MCF 10A (cell line): ENCODE measurements at regions of chr7 and their contacts with region 1.

Region 1: GRCh38 chr7:5704534-5704922 is 76.9 kb downstream of the RNF216 start:
- DNase-seq: peak; percentile 86
- H3K4me3 Mint-ChIP-seq: no peak overlapping the region
- H3K27ac Mint-ChIP-seq: no peak overlapping the region
- H3K4me1 Mint-ChIP-seq: peaks cover 31% of the 10 kb centered on the region
- H3K27me3 Mint-ChIP-seq: no peaks in the 10 kb centered on the region
- CTCF ChIP-seq: peak; percentile 69

Region 2: GRCh38 chr7:5657901-5658300 is 46.6 kb before region 1 on chr7:
- CTCF ChIA-PET with region 1: no interaction called
- POLR2A ChIA-PET with region 1: no interaction called
- intact Hi-C with region 1: no loop called
- DNase-seq: peak; percentile 73
- H3K4me3 Mint-ChIP-seq: peak overlapping the region; percentile 19
- H3K27ac Mint-ChIP-seq: no peak overlapping the region
- H3K4me1 Mint-ChIP-seq: peaks cover 16% of the 10 kb centered on the region
- H3K27me3 Mint-ChIP-seq: no peaks in the 10 kb centered on the region
- CTCF ChIP-seq: no peak

Region 3: DNA sequence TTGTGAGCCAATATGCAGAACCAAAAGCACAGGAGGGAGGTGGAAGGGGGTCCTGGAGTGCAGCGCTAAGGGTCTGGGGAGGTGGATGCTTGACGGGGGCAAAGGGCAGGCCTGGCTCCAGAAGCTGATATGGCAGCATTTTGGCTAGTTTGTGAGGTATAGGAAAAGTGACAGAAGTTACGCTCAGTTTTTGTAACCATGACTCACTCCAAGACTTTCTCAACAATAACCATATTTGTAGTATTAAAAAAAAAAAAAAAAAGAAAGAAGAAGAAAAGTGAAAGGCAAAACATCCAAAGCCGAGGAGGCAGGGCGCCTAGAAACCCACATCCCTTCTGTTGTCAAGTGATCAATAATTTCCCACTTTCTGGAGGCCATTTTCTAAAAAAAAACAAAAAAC is 15.4 kb before region 1 on chr7:
- CTCF ChIA-PET with region 1: interaction called, 49 read pairs
- POLR2A ChIA-PET with region 1: interaction called, 92 read pairs
- intact Hi-C with region 1: no loop called
- DNase-seq: peak; percentile 57
- H3K4me3 Mint-ChIP-seq: no peak overlapping the region
- H3K27ac Mint-ChIP-seq: peak overlapping the region; percentile 97
- H3K4me1 Mint-ChIP-seq: peaks cover 45% of the 10 kb centered on the region
- H3K27me3 Mint-ChIP-seq: no peaks in the 10 kb centered on the region
- CTCF ChIP-seq: no peak

Region 4: GRCh38 chr7:5780801-5781496 is 76.4 kb after region 1 on chr7:
- CTCF ChIA-PET with region 1: interaction called, 3 read pairs
- POLR2A ChIA-PET with region 1: interaction called, 6 read pairs
- intact Hi-C with region 1: loop called (anchors 2 kb)
- DNase-seq: peak; percentile 26
- H3K4me3 Mint-ChIP-seq: peak overlapping the region; percentile 81
- H3K27ac Mint-ChIP-seq: peak overlapping the region; percentile 69
- H3K4me1 Mint-ChIP-seq: peaks cover 11% of the 10 kb centered on the region
- H3K27me3 Mint-ChIP-seq: no peaks in the 10 kb centered on the region
- CTCF ChIP-seq: no peak